Activated CD8-positive, alpha-beta T cell treated with anti-CD3 and anti-CD28 coated beads for 36 hours (primary cell): ENCODE measurements at regions of chr6 and their contacts with region 1.

Region 1: DNA sequence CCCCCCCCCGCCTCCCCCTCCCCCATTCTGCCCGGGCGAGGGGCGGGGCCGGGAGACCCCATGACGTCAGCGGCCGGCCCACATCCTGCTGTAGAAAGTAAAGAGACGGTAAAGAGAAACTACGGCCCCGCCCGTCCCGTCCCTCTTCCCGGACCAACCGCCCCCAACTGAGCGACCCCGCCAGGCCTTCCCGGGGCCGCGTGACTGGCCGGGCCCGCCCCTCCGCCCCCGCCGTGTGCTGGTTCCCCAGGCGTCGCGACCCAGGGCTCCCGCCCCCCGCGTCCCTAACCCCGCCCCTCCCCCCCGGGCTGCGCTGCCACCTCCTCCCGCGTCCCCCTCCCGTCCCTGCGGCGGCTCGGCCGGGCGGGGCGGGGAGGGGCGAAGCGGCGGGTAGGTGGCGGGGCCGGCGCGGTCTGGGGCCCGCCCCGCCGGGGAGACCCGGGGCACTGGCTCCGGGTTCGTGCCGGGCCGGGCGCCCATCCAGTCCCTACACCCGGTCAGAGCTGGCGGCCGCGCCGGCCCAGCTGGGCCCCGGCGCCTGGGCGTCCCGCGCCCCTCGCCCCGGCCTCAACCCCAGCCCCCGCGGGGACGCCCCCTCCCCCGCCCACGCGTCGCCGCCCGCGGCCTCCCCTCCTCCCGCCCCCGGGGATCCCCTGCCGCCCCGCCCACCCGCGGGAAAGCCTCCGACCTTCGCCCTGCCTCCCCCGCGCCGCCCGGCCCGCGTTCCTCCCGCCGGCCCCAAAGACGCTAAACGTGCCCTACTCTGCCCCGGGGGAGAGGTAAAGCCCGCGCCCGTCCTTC is 636 bp upstream of the HIVEP1 start:
- DNase-seq: peak; percentile 99
- ATAC-seq: peak; percentile 79
- H3K4me3 Mint-ChIP-seq: peak overlapping the region; percentile 98
- H3K27ac Mint-ChIP-seq: peak overlapping the region; percentile 96
- H3K4me1 Mint-ChIP-seq: peaks cover 41% of the 10 kb centered on the region
- H3K27me3 Mint-ChIP-seq: no peaks in the 10 kb centered on the region
- CTCF ChIP-seq: no peak

Region 2: DNA sequence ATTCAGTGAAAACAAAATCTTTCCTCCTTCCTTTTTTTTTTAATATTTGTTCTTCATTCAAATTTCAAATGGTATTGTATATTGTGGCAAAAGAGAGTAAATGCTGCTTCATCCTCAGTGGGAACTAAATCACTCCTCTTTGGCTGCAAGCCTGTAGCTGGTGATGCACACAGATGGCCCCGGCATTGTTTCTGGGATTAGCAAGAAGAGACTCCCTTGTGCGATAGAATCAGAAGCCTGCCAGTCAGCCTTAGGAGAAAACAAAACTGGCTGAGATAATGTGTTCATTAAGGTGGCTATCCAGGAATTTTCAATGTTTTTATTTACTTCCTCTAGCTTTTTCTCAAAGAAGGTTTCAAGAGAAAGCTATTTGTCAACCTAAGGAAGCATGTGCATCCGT is 946.6 kb before region 1 on chr6:
- CTCF ChIA-PET with region 1: no interaction called
- POLR2A ChIA-PET with region 1: no interaction called
- intact Hi-C with region 1: no loop called
- DNase-seq: no peak
- ATAC-seq: no peak
- H3K4me3 Mint-ChIP-seq: no peak overlapping the region
- H3K27ac Mint-ChIP-seq: no peak overlapping the region
- H3K4me1 Mint-ChIP-seq: no peaks in the 10 kb centered on the region
- H3K27me3 Mint-ChIP-seq: peaks cover 8% of the 10 kb centered on the region
- CTCF ChIP-seq: no peak

Region 3: GRCh38 chr6:12024699-12025434 is 13.4 kb after region 1 on chr6:
- CTCF ChIA-PET with region 1: interaction called, 10 read pairs
- POLR2A ChIA-PET with region 1: interaction called, 7 read pairs
- intact Hi-C with region 1: no loop called
- DNase-seq: no peak
- ATAC-seq: no peak
- H3K4me3 Mint-ChIP-seq: no peak overlapping the region
- H3K27ac Mint-ChIP-seq: no peak overlapping the region
- H3K4me1 Mint-ChIP-seq: peaks cover 55% of the 10 kb centered on the region
- H3K27me3 Mint-ChIP-seq: no peaks in the 10 kb centered on the region
- CTCF ChIP-seq: no peak

Region 4: GRCh38 chr6:12051861-12052368 is 40.4 kb after region 1 on chr6:
- CTCF ChIA-PET with region 1: interaction called, 3 read pairs
- POLR2A ChIA-PET with region 1: interaction called, 5 read pairs
- intact Hi-C with region 1: loop called (anchors 5 kb)
- DNase-seq: peak; percentile 85
- ATAC-seq: peak; percentile 87
- H3K4me3 Mint-ChIP-seq: peak overlapping the region; percentile 66
- H3K27ac Mint-ChIP-seq: peak overlapping the region; percentile 90
- H3K4me1 Mint-ChIP-seq: peaks cover 74% of the 10 kb centered on the region
- H3K27me3 Mint-ChIP-seq: no peaks in the 10 kb centered on the region
- CTCF ChIP-seq: no peak